Activated naive CD4-positive, alpha-beta T cell treated with anti-CD3 and anti-CD28 coated beads for 36 hours (primary cell): ENCODE measurements at regions of chr14 and their contacts with region 1.

Region 1: GRCh38 chr14:50860478-50861086 is 11.3 kb upstream of the ABHD12B start:
- DNase-seq: peak; percentile 96
- H3K4me3 Mint-ChIP-seq: peak overlapping the region; percentile 80
- H3K27ac Mint-ChIP-seq: peak overlapping the region; percentile 36
- H3K4me1 Mint-ChIP-seq: peaks cover 10% of the 10 kb centered on the region
- H3K27me3 Mint-ChIP-seq: no peaks in the 10 kb centered on the region

Region 2: GRCh38 chr14:50599700-50600444 is 260.7 kb before region 1 on chr14:
- CTCF ChIA-PET with region 1: interaction called, 20 read pairs
- intact Hi-C with region 1: loop called (anchors 1 kb)
- DNase-seq: no peak
- H3K4me3 Mint-ChIP-seq: no peak overlapping the region
- H3K27ac Mint-ChIP-seq: no peak overlapping the region
- H3K4me1 Mint-ChIP-seq: no peaks in the 10 kb centered on the region
- H3K27me3 Mint-ChIP-seq: no peaks in the 10 kb centered on the region

Region 3: DNA sequence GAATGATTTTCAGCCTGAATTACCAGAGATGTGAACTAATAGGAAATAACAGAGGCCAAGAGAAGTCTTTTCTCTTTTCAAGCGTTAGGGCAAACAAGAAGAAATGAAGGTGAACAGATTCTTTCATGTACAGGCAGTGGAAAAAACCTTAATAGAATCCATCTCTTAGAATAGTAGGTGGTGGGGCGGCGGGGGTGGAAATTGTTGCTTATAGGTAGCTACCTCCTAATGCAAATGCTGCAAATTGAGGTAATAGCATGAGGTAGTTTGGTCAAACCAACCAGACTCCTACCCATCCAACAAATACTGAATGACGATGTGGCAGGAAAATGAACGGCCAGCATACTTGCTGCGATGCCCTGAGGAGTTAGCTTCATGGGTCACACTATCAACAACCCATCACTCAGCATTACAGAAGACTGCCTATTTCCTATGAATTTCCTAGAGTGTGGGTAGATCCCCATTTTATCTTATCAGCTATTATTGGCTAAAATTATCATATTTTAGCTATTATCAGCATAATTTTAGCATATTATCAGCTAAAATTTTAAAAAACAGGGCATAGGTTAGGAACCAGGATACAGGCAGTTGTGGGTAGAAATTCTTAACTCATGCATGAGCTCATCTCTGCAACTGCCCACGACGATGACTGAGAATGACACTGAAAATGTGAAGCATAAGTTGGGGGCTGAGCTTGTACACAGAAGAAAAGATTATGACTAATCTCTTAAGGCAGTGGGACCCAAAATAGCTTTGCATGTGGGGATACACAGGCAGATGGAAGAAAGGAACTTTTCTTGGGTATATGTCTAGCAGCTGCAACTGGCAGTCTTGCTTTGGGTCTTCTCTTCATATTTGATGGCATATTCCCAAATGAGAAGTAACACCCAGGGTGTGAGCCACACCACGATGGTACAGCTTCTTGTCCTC is 98.3 kb before region 1 on chr14:
- CTCF ChIA-PET with region 1: interaction called, 18 read pairs
- intact Hi-C with region 1: no loop called
- DNase-seq: peak; percentile 74
- H3K4me3 Mint-ChIP-seq: no peak overlapping the region
- H3K27ac Mint-ChIP-seq: no peak overlapping the region
- H3K4me1 Mint-ChIP-seq: peaks cover 28% of the 10 kb centered on the region
- H3K27me3 Mint-ChIP-seq: no peaks in the 10 kb centered on the region

Region 4: DNA sequence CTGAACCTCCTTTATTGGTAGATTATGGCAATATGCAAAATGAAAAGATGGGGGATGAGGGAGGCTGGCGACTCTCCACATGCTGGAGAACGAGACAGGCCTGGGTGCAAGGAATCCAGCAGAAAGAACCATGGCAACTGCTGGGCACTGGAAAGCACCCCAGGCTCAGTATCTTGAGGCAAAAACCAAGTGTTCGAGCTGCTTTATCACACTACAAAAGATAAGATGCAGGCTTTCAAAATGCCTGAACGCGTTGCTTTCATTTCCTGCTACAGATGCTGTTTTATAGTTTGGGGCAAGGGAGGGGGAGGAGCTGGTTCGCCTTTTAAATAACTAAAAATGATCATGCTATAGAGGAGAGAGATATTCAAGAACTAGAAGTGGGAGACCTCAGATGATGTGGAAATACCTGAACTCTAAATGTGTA is 68.5 kb before region 1 on chr14:
- CTCF ChIA-PET with region 1: interaction called, 42 read pairs
- intact Hi-C with region 1: no loop called
- DNase-seq: peak; percentile 47
- H3K4me3 Mint-ChIP-seq: peak overlapping the region; percentile 68
- H3K27ac Mint-ChIP-seq: peak overlapping the region; percentile 79
- H3K4me1 Mint-ChIP-seq: peaks cover 77% of the 10 kb centered on the region
- H3K27me3 Mint-ChIP-seq: no peaks in the 10 kb centered on the region

Region 5: GRCh38 chr14:50830932-50831725 is 29.5 kb before region 1 on chr14 and contains the start of gene NIN:
- CTCF ChIA-PET with region 1: interaction called, 19 read pairs
- intact Hi-C with region 1: loop called (anchors 1 kb)
- DNase-seq: peak; percentile 69
- H3K4me3 Mint-ChIP-seq: peak within 1 kb of the TSS; percentile 88
- H3K27ac Mint-ChIP-seq: peak within 1 kb of the TSS; percentile 83
- H3K4me1 Mint-ChIP-seq: peaks cover 62% of the 10 kb centered on the region
- H3K27me3 Mint-ChIP-seq: no peaks in the 10 kb centered on the region
- total RNA-seq, gene NIN: 56.9 to 57.9 TPM